ENCODE measurements at regions of chr12 and their contacts with region 1.

Region 1: DNA sequence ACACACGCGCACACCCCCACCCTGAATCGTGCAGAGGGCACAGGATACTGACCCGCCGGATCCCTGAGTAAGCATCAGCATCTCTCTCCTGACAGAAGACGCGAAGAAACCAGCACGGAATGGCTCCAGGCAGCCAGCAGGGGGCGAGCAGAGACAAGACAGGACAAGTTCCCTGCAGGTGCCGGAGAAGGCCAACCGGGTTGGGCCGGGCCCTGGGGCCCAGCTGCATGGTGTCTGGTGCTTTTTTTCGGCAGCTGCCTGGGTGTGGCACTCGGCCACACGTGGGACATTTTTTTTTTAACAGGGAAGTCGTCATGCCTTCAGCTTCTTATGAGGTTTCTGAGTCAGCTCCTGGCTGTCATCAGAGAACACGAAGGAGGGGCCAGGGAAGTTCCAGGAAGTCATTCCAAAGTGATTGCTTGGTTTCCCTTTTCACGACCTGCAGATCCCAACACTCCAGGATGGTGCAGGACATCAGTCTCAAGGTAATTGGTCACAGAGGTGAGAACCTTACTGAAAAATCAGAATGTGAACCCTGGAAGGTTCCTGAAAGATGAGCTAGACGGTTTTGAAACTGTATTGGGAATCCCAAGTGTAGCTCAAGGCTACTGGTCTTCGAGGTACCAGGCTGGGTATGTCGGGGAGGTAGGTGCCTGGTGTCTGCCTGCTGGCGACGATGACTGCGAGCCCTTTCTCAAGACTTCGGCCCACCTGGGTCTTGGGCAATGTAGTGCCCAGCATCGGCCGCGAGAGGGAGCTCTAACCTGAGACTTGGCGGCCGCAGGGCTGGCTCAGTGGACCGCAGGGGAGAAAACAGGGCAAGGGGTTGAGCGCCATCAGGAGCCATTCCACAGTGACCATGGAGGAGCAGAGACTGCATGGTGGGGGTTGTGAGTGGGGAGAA is 190.8 kb upstream of the PRMT8 start:
- DNase-seq: peak; percentile 79
- H3K4me3 ChIP-seq: no peak overlapping the region
- H3K27ac ChIP-seq: peak overlapping the region; percentile 48
- H3K4me1 ChIP-seq: peaks cover 22% of the 10 kb centered on the region
- H3K27me3 ChIP-seq: no peaks in the 10 kb centered on the region
- CTCF ChIP-seq: peak; percentile 96
- POLR2A ChIP-seq: no peak

Region 2: GRCh38 chr12:2890388-2891239 is 409.6 kb before region 1 on chr12 and contains the start of gene TULP3:
- CTCF ChIA-PET with region 1: no interaction called
- POLR2A ChIA-PET with region 1: no interaction called
- dilution Hi-C with region 1: no loop called
- intact Hi-C with region 1: no loop called
- DNase-seq: peak; percentile 99
- H3K4me3 ChIP-seq: peak within 1 kb of the TSS; percentile 32 to 76 (median 75)
- H3K27ac ChIP-seq: peak within 1 kb of the TSS; percentile 59
- H3K4me1 ChIP-seq: peaks cover 11% of the 10 kb centered on the region
- H3K27me3 ChIP-seq: no peaks in the 10 kb centered on the region
- CTCF ChIP-seq: peak in 1 of 2 donors; percentile 18
- POLR2A ChIP-seq: peak; percentile 86
- total RNA-seq, gene TULP3: 30.8 and 32.9 TPM in 2 replicates

Region 3: GRCh38 chr12:3073438-3074250 is 226.5 kb before region 1 on chr12:
- CTCF ChIA-PET with region 1: interaction called, 14 read pairs
- POLR2A ChIA-PET with region 1: no interaction called
- dilution Hi-C with region 1: no loop called
- intact Hi-C with region 1: no loop called
- DNase-seq: peak; percentile 90
- H3K4me3 ChIP-seq: no peak overlapping the region
- H3K27ac ChIP-seq: no peak overlapping the region
- H3K4me1 ChIP-seq: peaks cover 20% of the 10 kb centered on the region
- H3K27me3 ChIP-seq: peaks cover 0 to 3% of the 10 kb centered on the region in 2 experiments
- CTCF ChIP-seq: peak; percentile 94 to 98
- POLR2A ChIP-seq: no peak

Region 4: GRCh38 chr12:3313675-3314663 is 13.8 kb after region 1 on chr12:
- CTCF ChIA-PET with region 1: interaction called, 149 read pairs
- POLR2A ChIA-PET with region 1: no interaction called
- dilution Hi-C with region 1: no loop called
- intact Hi-C with region 1: no loop called
- DNase-seq: peak; percentile 20
- H3K4me3 ChIP-seq: no peak overlapping the region
- H3K27ac ChIP-seq: no peak overlapping the region
- H3K4me1 ChIP-seq: peaks cover 4% of the 10 kb centered on the region
- H3K27me3 ChIP-seq: peaks cover 0 to 1% of the 10 kb centered on the region in 2 experiments
- CTCF ChIP-seq: peak; percentile 10 to 62
- POLR2A ChIP-seq: no peak

Region 5: GRCh38 chr12:3658327-3659163 is 358.4 kb after region 1 on chr12:
- CTCF ChIA-PET with region 1: interaction called, 4 read pairs
- POLR2A ChIA-PET with region 1: no interaction called
- dilution Hi-C with region 1: no loop called
- intact Hi-C with region 1: loop called (anchors 5 kb)
- DNase-seq: peak; percentile 20
- H3K4me3 ChIP-seq: no peak overlapping the region
- H3K27ac ChIP-seq: no peak overlapping the region
- H3K4me1 ChIP-seq: no peaks in the 10 kb centered on the region
- H3K27me3 ChIP-seq: no peaks in the 10 kb centered on the region
- CTCF ChIP-seq: peak; percentile 44 to 68
- POLR2A ChIP-seq: no peak

Region 6: GRCh38 chr12:3777206-3777809 is 477.1 kb after region 1 on chr12:
- CTCF ChIA-PET with region 1: interaction called, 59 read pairs
- POLR2A ChIA-PET with region 1: no interaction called
- dilution Hi-C with region 1: no loop called
- intact Hi-C with region 1: loop called (anchors 1 kb)
- DNase-seq: peak; percentile 60
- H3K4me3 ChIP-seq: no peak overlapping the region
- H3K27ac ChIP-seq: no peak overlapping the region
- H3K4me1 ChIP-seq: peaks cover 4% of the 10 kb centered on the region
- H3K27me3 ChIP-seq: peaks cover 10 to 13% of the 10 kb centered on the region in 2 experiments
- CTCF ChIP-seq: peak; percentile 59 to 67
- POLR2A ChIP-seq: no peak

Region 7: GRCh38 chr12:3885277-3886094 is 585.3 kb after region 1 on chr12:
- CTCF ChIA-PET with region 1: interaction called, 10 read pairs
- POLR2A ChIA-PET with region 1: no interaction called
- dilution Hi-C with region 1: no loop called
- intact Hi-C with region 1: no loop called
- DNase-seq: peak; percentile 57
- H3K4me3 ChIP-seq: peak overlapping the region in 1 of 3 experiments; percentile 50
- H3K27ac ChIP-seq: no peak overlapping the region
- H3K4me1 ChIP-seq: no peaks in the 10 kb centered on the region
- H3K27me3 ChIP-seq: peaks cover 0 to 5% of the 10 kb centered on the region in 2 experiments
- CTCF ChIP-seq: peak; percentile 55 to 61
- POLR2A ChIP-seq: no peak